Naive thymus-derived CD4-positive, alpha-beta T cell (primary cell): ENCODE measurements at regions of chr6 and their contacts with region 1.

Region 1: GRCh38 chr6:73610444-73611275 is 43.1 kb downstream of the SLC17A5 start:
- DNase-seq: peak in 7 of 9 donors; percentile 25 to 66 (median 58)
- ATAC-seq: peak; percentile 80
- H3K4me3 ChIP-seq: no peak overlapping the region
- H3K4me3 Mint-ChIP-seq: no peak overlapping the region
- H3K27ac ChIP-seq: no peak overlapping the region
- H3K27ac Mint-ChIP-seq: peak overlapping the region in 4 of 9 donors; percentile 12 to 56 (median 29)
- H3K4me1 ChIP-seq: no peaks in the 10 kb centered on the region
- H3K4me1 Mint-ChIP-seq: peaks cover 4 to 6% (median 5%) of the 10 kb centered on the region in 7 donors
- H3K27me3 ChIP-seq: no peaks in the 10 kb centered on the region
- H3K27me3 Mint-ChIP-seq: no peaks in the 10 kb centered on the region

Region 2: DNA sequence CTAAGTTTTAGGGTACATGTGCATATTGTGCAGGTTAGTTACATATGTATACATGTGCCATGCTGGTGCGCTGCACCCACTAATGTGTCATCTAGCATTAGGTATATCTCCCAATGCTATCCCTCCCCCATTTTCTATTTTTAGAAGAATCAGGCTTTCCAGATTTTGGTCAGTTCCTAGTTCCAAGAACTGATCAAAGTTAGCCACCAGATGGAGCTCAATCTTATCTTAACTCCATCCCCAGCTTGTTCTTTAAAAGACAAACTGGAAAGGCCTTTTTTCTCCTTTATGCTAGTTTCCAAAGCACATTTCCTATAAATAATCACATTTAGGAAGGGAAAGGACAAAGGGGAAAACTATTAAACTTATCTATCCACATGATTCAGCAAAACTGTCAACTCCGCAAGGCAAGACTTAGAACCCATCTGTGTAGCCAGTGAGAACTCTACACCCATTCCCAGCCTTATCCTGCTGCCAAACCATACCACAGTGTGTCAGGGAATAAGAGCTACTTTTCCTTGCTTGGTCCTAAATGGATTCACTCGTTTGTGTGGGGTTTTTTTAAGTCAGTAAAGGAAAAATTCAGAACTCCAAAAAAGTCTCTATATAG is 324.9 kb before region 1 on chr6:
- CTCF ChIA-PET with region 1: no interaction called
- POLR2A ChIA-PET with region 1: no interaction called
- intact Hi-C with region 1: loop called in 1 of 2 experiments (anchors 2 kb)
- DNase-seq: no peak
- ATAC-seq: no peak
- H3K4me3 ChIP-seq: no peak overlapping the region
- H3K4me3 Mint-ChIP-seq: no peak overlapping the region
- H3K27ac ChIP-seq: no peak overlapping the region
- H3K27ac Mint-ChIP-seq: no peak overlapping the region
- H3K4me1 ChIP-seq: no peaks in the 10 kb centered on the region
- H3K4me1 Mint-ChIP-seq: peaks cover 0 to 4% (median 0%) of the 10 kb centered on the region in 7 donors
- H3K27me3 ChIP-seq: no peaks in the 10 kb centered on the region
- H3K27me3 Mint-ChIP-seq: no peaks in the 10 kb centered on the region

Region 3: GRCh38 chr6:73515204-73515655 is 95.4 kb before region 1 on chr6:
- CTCF ChIA-PET with region 1: interaction called, 105 read pairs
- POLR2A ChIA-PET with region 1: interaction called, 107 read pairs
- intact Hi-C with region 1: loop called (anchors 1 kb)
- DNase-seq: no peak
- ATAC-seq: peak; percentile 5
- H3K4me3 ChIP-seq: no peak overlapping the region
- H3K4me3 Mint-ChIP-seq: peak overlapping the region in 8 of 10 donors; percentile 25 to 84 (median 58)
- H3K27ac ChIP-seq: peak overlapping the region; percentile 15
- H3K27ac Mint-ChIP-seq: peak overlapping the region; percentile 3 to 89 (median 66)
- H3K4me1 ChIP-seq: peaks cover 35 to 48% of the 10 kb centered on the region in 2 donors
- H3K4me1 Mint-ChIP-seq: peaks cover 17 to 59% (median 46%) of the 10 kb centered on the region in 7 donors
- H3K27me3 ChIP-seq: no peaks in the 10 kb centered on the region
- H3K27me3 Mint-ChIP-seq: peaks cover 0 to 2% (median 0%) of the 10 kb centered on the region in 5 donors

Region 4: DNA sequence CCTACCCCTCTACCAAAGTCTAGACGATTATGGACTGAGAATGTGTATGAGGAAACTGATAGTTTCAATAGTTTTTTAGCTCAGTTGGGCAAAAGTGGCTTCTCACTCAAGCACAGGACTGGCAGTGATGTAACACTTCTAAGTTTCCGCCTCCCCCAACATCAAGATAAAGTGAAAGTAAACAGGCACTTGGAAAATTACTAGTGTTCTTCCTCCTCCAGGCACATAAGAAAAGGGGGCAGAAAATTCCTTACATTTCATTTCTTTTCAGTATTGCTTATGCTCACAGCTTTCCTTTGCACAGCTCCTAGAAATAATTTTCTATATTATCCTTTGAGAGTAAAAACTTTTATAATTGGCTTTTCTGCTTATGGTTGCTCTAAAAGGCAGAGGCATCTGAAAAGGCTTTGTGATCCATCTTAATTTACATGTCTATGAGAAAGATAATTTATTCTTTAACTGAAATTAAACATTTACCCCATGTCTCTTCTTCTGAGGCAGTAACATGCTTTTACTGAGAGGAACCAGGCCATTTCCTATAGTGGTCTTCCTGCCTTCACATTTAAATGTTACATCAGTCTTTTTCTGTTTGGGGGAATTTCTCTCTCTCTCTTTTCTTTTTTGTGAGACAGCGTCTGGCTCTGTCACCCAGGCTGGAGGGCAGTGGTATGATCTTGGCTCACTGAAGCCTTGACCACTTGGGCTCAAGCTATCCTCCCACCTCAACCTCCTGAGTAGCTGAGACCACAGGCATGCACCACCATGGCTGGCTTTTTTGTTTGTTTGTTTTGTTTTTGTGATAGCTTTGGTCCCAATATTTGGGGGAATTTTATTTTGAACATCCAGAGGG is 24.9 kb before region 1 on chr6:
- CTCF ChIA-PET with region 1: interaction called, 7 read pairs
- POLR2A ChIA-PET with region 1: interaction called, 11 read pairs
- intact Hi-C with region 1: loop called in 1 of 2 experiments (anchors 1 kb)
- DNase-seq: peak in 7 of 9 donors; percentile 55 to 76 (median 67)
- ATAC-seq: peak; percentile 82
- H3K4me3 ChIP-seq: peak overlapping the region; percentile 51
- H3K4me3 Mint-ChIP-seq: peak overlapping the region; percentile 78 to 90 (median 86)
- H3K27ac ChIP-seq: peak overlapping the region; percentile 89
- H3K27ac Mint-ChIP-seq: peak overlapping the region; percentile 91 to 100 (median 99)
- H3K4me1 ChIP-seq: peaks cover 6 to 16% of the 10 kb centered on the region in 2 donors
- H3K4me1 Mint-ChIP-seq: peaks cover 22 to 27% (median 24%) of the 10 kb centered on the region in 7 donors
- H3K27me3 ChIP-seq: no peaks in the 10 kb centered on the region
- H3K27me3 Mint-ChIP-seq: no peaks in the 10 kb centered on the region